B cell (primary cell): ENCODE measurements at regions of chr7 and their contacts with region 1.

Region 1: GRCh38 chr7:7182156-7183060 is at the start of gene C1GALT1:
- DNase-seq: peak; percentile 99
- ATAC-seq: peak; percentile 79
- H3K4me3 ChIP-seq: peak within 1 kb of the TSS; percentile 85 to 97 (median 91)
- H3K4me3 Mint-ChIP-seq: peak within 1 kb of the TSS; percentile 97
- H3K27ac ChIP-seq: peak within 1 kb of the TSS; percentile 89 to 93
- H3K27ac Mint-ChIP-seq: peak within 1 kb of the TSS; percentile 98
- H3K4me1 ChIP-seq: peaks cover 29 to 41% of the 10 kb centered on the region in 2 donors
- H3K4me1 Mint-ChIP-seq: peaks cover 30% of the 10 kb centered on the region
- H3K27me3 ChIP-seq: no peaks in the 10 kb centered on the region
- H3K27me3 Mint-ChIP-seq: no peaks in the 10 kb centered on the region
- CTCF ChIP-seq: peak; percentile 64
- total RNA-seq, gene C1GALT1: 59.8 and 66.8 TPM in 2 replicates

Region 2: DNA sequence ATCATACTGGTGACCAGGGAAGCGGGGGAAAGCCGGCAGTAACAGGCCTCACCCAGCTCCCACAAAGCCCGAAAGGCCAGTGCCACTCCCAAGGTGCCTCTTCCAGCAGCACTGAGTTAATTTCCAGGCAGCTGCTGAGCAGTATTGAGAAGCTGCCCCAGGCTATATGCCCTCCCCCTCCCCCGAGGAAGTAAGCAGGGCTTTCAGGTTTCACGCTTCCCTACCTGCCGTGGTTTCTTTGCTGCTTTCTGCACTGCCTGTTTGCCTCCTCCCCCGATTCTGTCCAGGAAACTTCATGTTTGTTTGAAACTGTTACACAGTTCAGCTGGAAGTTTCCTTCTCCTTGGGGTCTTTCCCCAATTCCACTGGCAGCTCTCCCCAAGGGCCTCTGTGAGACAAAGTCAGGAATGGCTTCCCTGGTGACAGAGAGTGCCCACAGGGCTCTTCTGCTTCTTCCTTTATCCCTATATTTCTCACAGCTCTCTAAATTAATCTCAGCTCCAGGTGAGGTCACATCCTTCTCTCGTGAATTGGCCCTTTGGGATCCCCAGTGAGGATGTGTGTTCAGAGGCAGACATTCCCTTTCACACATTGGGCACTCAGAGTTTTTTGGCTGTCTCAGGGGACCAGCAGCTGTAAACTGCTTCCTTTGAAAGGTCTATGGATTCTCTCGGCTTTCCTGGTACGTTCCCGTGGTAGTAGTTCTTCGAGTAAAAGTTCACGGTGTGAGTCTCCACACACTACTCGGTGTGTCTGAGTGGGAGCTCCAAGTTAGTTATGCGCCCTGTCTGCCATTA is 19.4 kb after region 1 on chr7:
- CTCF ChIA-PET with region 1: interaction called, 11 read pairs
- POLR2A ChIA-PET with region 1: interaction called, 4 read pairs
- intact Hi-C with region 1: loop called (anchors 1 kb)
- DNase-seq: peak; percentile 76
- ATAC-seq: peak; percentile 99
- H3K4me3 ChIP-seq: peak overlapping the region in 3 of 5 experiments; percentile 23 to 46 (median 33)
- H3K4me3 Mint-ChIP-seq: peak overlapping the region; percentile 64
- H3K27ac ChIP-seq: peak overlapping the region; percentile 52 to 75
- H3K27ac Mint-ChIP-seq: peak overlapping the region; percentile 79
- H3K4me1 ChIP-seq: peaks cover 26 to 46% of the 10 kb centered on the region in 2 donors
- H3K4me1 Mint-ChIP-seq: peaks cover 84% of the 10 kb centered on the region
- H3K27me3 ChIP-seq: no peaks in the 10 kb centered on the region
- H3K27me3 Mint-ChIP-seq: no peaks in the 10 kb centered on the region
- CTCF ChIP-seq: no peak

Region 3: GRCh38 chr7:7257899-7258692 is 75.7 kb after region 1 on chr7:
- CTCF ChIA-PET with region 1: interaction called, 3 read pairs
- POLR2A ChIA-PET with region 1: interaction called, 7 read pairs
- intact Hi-C with region 1: loop called (anchors 1 kb)
- DNase-seq: peak; percentile 61
- ATAC-seq: peak; percentile 74
- H3K4me3 ChIP-seq: peak overlapping the region; percentile 12 to 63 (median 51)
- H3K4me3 Mint-ChIP-seq: peak overlapping the region; percentile 71
- H3K27ac ChIP-seq: peak overlapping the region; percentile 80 to 81
- H3K27ac Mint-ChIP-seq: peak overlapping the region; percentile 89
- H3K4me1 ChIP-seq: peaks cover 52 to 56% of the 10 kb centered on the region in 2 donors
- H3K4me1 Mint-ChIP-seq: peaks cover 61% of the 10 kb centered on the region
- H3K27me3 ChIP-seq: no peaks in the 10 kb centered on the region
- H3K27me3 Mint-ChIP-seq: no peaks in the 10 kb centered on the region
- CTCF ChIP-seq: no peak

Region 4: GRCh38 chr7:7424151-7424873 is 241.9 kb after region 1 on chr7:
- CTCF ChIA-PET with region 1: interaction called, 9 read pairs
- POLR2A ChIA-PET with region 1: interaction called, 3 read pairs
- intact Hi-C with region 1: loop called (anchors 5 kb)
- DNase-seq: peak; percentile 61
- ATAC-seq: peak; percentile 68
- H3K4me3 ChIP-seq: peak overlapping the region; percentile 36 to 66 (median 51)
- H3K4me3 Mint-ChIP-seq: peak overlapping the region; percentile 92
- H3K27ac ChIP-seq: peak overlapping the region in 1 of 2 donors; percentile 28
- H3K27ac Mint-ChIP-seq: peak overlapping the region; percentile 64
- H3K4me1 ChIP-seq: no peaks in the 10 kb centered on the region
- H3K4me1 Mint-ChIP-seq: peaks cover 10% of the 10 kb centered on the region
- H3K27me3 ChIP-seq: no peaks in the 10 kb centered on the region
- H3K27me3 Mint-ChIP-seq: no peaks in the 10 kb centered on the region
- CTCF ChIP-seq: peak; percentile 58

Region 5: DNA sequence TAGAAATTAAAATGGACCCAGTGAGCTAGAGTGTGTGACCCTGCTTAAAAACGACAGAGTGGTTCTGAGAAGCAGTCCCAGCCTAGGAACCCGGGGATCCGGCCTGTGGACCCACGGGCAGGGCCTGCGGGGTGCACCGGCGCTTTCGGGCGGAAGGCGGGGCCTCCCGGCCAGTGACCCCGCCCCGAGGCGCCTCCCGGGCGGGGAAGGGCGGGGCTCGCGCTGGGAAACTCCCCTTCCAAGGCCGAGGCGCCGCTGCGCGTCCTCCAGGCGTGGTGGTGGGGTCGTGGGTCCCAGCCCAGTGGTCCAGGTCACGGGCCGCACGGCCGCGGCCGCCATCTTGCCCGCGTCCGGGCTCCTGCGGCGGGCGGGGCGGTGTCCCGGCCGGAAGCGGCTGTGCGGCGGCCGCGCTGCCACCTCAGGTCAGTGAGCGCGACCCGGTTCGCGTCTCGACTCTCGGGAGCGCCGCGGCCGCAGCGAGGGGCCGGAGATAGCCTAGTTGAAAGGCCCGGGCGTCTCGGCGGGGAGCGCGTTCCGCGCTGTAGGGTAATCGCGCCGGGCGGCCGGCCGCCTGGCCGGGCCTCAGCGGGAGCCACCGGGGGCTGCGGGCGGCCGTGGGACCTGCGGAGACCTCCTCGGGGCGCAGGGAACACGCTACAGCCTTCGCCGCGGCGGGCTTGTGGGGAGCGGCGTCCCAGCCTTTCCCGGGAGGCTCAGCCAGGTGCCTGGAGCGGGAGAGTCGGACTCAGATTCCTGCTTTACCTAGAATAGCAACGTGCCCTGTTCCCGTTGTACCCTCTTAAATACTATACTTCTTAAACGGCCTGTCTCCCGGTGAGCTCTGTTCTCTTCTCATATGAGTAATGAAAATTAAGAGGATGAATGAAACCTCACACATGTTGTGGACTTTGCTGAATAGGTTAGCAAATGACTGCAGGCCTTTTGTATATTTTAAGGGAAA is 384.5 kb after region 1 on chr7 and contains the start of gene MIOS:
- CTCF ChIA-PET with region 1: interaction called, 3 read pairs
- POLR2A ChIA-PET with region 1: no interaction called
- intact Hi-C with region 1: loop called (anchors 1 kb)
- DNase-seq: peak; percentile 92
- ATAC-seq: peak; percentile 85
- H3K4me3 ChIP-seq: peak within 1 kb of the TSS; percentile 65 to 94 (median 81)
- H3K4me3 Mint-ChIP-seq: peak within 1 kb of the TSS; percentile 83
- H3K27ac ChIP-seq: peak within 1 kb of the TSS; percentile 93 to 99
- H3K27ac Mint-ChIP-seq: peak within 1 kb of the TSS; percentile 90
- H3K4me1 ChIP-seq: peaks cover 41 to 44% of the 10 kb centered on the region in 2 donors
- H3K4me1 Mint-ChIP-seq: peaks cover 35% of the 10 kb centered on the region
- H3K27me3 ChIP-seq: no peaks in the 10 kb centered on the region
- H3K27me3 Mint-ChIP-seq: no peaks in the 10 kb centered on the region
- CTCF ChIP-seq: no peak
- total RNA-seq, gene MIOS: 48.7 and 50.1 TPM in 2 replicates